Activated T-helper 2 cell treated with anti-CD3 and anti-CD28 coated beads, Interferon-gamma antibody, Interleukin-2, Interleukin-4, amounts not matched to agents 10 μg/mL and 5 μg/mL and 100 μg/mL, durations not matched to agents 14 hours and 24 hours and 36 hours (primary cell): ENCODE measurements at regions of chr10 and their contacts with region 1.

Region 1: DNA sequence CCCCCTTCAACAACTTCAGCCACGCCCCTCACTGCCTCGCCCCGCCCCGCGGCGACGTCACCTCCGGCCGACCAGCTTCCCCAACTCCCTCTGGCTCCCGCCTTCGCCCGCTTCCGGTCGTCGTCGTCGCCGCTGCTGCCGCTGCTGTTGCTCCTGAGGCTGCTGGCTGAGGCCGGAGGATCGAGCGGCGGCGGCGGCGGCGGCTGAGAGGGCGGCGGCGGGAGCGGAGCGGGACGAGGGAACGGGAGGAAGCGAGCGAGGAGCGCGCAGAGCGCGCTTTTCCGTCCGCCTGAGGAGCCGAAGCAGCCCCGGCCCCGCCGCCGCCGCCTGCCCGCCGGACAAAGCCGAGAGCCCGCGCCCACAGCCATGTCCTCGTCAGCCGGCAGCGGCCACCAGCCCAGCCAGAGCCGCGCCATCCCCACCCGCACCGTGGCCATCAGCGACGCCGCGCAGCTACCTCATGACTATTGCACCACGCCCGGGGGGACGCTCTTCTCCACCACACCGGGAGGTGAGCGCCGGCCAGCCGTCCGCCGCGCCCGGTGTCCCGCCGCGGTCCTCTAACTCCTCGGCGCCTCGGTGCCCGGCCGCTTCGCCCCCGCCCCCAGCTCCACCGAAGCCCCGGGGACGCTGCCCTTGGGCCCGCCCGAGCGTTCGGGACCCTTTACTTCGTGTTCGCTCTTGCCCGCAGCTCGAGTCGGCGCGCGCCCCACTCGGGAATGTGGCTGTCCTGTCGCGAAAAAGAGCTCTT is at the start of gene EIF4EBP2:
- DNase-seq: peak; percentile 98
- H3K4me3 Mint-ChIP-seq: peak within 1 kb of the TSS; percentile 91
- H3K27ac Mint-ChIP-seq: peak within 1 kb of the TSS; percentile 79
- H3K4me1 Mint-ChIP-seq: peaks cover 31% of the 10 kb centered on the region
- H3K27me3 Mint-ChIP-seq: no peaks in the 10 kb centered on the region
- total RNA-seq, gene EIF4EBP2: 39.5 and 40.0 TPM in 2 replicates

Region 2: DNA sequence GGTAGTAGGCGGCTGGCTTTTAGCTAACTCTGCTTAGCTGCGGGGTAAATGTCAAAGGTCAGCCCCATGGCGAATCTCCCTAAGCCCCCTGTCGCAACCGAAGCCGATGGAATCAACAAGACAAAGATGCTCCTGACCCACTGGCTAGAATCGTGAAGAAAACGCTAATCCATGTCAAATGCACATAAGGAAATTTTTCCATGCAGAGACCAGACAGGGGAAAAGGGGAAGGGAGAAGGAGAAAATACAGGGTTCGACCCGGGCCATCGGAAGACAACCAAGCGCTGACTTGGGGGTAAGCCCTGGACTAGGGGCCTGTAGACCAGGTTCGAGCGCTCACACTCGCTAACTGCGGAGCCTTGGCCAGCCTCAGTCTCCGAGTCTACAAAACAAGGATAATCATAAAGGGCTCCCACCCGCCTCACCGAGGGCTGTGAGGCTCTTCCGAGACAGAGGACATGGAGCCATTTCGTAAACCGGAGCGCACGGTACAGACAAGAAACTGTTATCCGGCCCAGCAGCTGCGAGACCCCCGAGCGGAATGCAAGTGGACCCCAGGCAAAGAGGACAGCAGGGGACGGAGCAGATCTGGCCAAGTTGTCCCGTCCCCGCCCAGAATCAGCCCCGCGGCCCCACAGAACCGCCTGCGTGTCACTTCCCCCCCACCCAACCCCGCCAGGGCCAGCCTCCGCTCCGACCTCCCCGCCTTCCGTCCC is 234.4 kb before region 1 on chr10:
- intact Hi-C with region 1: loop called (anchors 2 kb)
- DNase-seq: no peak
- H3K4me3 Mint-ChIP-seq: peak overlapping the region; percentile 89
- H3K27ac Mint-ChIP-seq: peak overlapping the region; percentile 94
- H3K4me1 Mint-ChIP-seq: peaks cover 48% of the 10 kb centered on the region
- H3K27me3 Mint-ChIP-seq: no peaks in the 10 kb centered on the region

Region 3: DNA sequence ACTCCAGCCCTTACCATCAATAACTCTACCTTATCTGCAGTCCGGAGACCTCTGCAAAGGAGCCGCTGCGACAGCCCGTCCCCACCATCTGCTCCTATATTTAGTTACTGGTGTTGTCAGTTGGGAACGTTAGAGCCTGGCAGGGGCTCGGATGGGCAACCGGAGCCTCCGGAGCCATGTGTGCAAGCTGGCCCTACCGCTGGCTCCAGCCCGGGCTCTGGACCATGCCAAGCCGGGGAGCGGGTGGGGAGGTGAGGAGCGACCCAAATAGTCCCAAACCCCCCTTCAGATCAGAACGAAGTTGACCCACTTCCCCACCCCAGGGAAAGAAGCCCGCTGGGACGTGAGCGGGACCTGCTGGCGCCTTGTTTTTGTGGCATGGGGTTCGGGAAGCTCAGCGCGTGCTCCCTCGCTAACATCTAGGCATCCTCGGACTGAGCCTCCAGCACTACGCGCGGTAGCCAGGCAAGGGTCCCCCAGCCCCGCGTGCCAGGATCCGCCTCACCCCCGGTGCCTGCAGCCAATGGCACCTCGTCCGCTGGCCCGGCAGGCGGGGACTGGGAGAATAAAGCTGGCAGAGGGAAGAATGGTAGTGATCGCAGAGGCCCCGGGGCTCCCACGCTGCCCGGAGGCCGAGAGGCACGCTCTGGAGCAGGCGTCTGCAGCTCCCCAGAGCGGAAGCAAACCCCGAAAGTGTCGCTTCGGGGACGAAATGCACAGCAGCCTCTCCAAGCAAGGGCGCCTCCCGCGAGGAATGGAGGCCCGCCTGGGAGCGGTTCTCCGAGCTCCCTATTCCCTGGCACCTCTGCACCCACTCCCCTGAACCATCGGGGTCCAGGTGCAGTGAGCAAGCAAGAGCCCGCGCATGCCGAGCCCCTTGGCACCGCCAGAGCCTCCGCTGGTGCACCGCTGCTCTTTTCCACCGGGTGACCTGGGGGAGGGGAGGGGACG is 22.5 kb before region 1 on chr10:
- intact Hi-C with region 1: loop called (anchors 1 kb)
- DNase-seq: peak; percentile 40
- H3K4me3 Mint-ChIP-seq: peak overlapping the region; percentile 85
- H3K27ac Mint-ChIP-seq: no peak overlapping the region
- H3K4me1 Mint-ChIP-seq: peaks cover 14% of the 10 kb centered on the region
- H3K27me3 Mint-ChIP-seq: no peaks in the 10 kb centered on the region

Region 4: DNA sequence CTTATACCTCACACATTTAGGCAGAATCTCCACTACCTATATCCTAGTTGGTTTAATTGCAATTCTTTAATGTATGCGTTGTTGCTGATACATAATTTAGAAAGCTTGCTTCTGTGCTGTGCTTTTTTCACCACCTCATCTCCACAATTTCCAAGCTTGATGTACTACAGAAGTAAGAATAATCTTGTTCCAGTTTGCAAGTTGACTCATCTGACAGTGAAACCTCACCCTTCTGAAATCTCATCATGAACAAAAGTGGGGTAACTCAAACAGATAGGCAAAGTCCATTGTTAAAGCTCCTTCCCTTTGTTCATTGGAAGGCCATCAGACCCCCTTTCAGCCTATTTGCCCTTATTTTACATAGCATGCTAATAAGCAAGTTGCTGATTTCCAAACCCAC is 13.4 kb after region 1 on chr10:
- intact Hi-C with region 1: loop called (anchors 1 kb)
- DNase-seq: no peak
- H3K4me3 Mint-ChIP-seq: no peak overlapping the region
- H3K27ac Mint-ChIP-seq: peak overlapping the region; percentile 5
- H3K4me1 Mint-ChIP-seq: peaks cover 33% of the 10 kb centered on the region
- H3K27me3 Mint-ChIP-seq: no peaks in the 10 kb centered on the region